ENCODE measurements at regions of chr3 and their contacts with region 1.

Region 1: DNA sequence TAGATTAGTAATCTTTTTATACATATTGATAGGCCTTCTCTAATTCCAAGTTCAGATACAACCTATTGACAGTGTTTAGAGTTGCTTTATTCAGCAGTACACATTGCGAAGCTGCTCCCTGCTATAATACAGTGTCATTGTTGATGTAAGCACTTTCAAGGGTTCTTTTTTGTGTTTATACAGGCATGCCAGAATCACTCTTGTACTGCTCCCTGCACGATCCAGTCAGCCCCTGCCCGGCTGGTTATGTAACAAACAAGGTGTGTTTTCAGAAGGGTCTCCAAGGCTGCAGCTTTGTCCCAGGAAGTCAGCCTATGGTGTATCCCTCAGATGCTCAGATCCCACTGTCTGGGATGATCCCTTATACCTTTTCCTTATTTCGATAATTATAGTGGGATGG is 11.3 kb downstream of the QTRT2 start:
- DNase-seq: no peak
- ATAC-seq: no peak
- H3K4me3 ChIP-seq: no peak overlapping the region
- H3K27ac ChIP-seq: no peak overlapping the region
- H3K4me1 ChIP-seq: no peaks in the 10 kb centered on the region
- CTCF ChIP-seq: no peak
- EP300 ChIP-seq: no peak
- POLR2A ChIP-seq: no peak
- RAD21 ChIP-seq: no peak

Region 2: DNA sequence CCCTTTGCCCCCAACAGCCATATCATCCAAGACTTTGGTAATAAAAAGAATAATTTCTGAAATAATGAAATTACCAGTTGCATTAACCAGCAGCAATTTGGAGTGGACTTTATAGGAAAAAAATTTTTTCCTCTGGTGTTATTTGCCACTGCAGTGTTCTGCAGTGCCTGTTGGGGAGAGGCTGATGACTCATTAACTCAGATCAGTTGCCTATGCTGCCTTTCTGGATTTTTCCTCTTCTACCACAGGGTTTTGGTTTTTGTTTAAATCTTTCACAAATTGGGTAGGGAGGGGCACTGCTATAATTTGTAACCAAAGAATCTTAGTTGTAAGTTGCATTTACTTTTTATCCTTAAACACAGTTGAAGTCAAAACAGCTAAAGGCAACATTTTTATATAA is 298.3 kb before region 1 on chr3:
- CTCF ChIA-PET with region 1: no interaction called
- POLR2A ChIA-PET with region 1: no interaction called
- DNase-seq: peak; percentile 5 to 53
- ATAC-seq: peak; percentile 66 to 76; a peak in 5 of 6 replicates
- H3K4me3 ChIP-seq: no peak overlapping the region
- H3K27ac ChIP-seq: no peak overlapping the region
- H3K4me1 ChIP-seq: peaks cover 9% of the 10 kb centered on the region; the same call in 2 of the 3 replicates
- CTCF ChIP-seq: no peak
- EP300 ChIP-seq: no peak
- POLR2A ChIP-seq: no peak
- RAD21 ChIP-seq: no peak

Region 3: GRCh38 chr3:114056130-114057010 is 11.4 kb before region 1 on chr3 and contains the starts of genes CCDC191 and QTRT2:
- CTCF ChIA-PET with region 1: interaction called, 10 read pairs
- POLR2A ChIA-PET with region 1: no interaction called
- DNase-seq: peak; percentile 86 to 99
- ATAC-seq: peak; percentile 99 to 100
- H3K4me3 ChIP-seq: peak within 1 kb of the TSS; percentile 78
- H3K27ac ChIP-seq: peak within 1 kb of the TSS; percentile 81 to 91
- H3K4me1 ChIP-seq: peaks cover 13% of the 10 kb centered on the region
- CTCF ChIP-seq: no peak
- EP300 ChIP-seq: no peak
- POLR2A ChIP-seq: peak; percentile 71
- RAD21 ChIP-seq: no peak
- polyA plus RNA-seq, gene CCDC191: 4.6 and 5.0 TPM in 2 replicates
- polyA plus RNA-seq, gene QTRT2: 26.2 and 33.9 TPM in 2 replicates

Measured in A549 (cell line).